Posterior cingulate gyrus (tissue), 11 donors: ENCODE measurements at regions of chr19 and their contacts with region 1.

Region 1: GRCh38 chr19:27906081-27906480 is 1306.9 kb downstream of the UQCRFS1 start:
- DNase-seq: peak in 7 of 10 donors; percentile 46 to 94 (median 67)

Region 2: GRCh38 chr19:27793644-27794493 is 112.2 kb before region 1 on chr19:
- intact Hi-C with region 1: loop called (anchors 2 kb)
- DNase-seq: peak; percentile 94 to 99 (median 97)